Activated CD4-positive, alpha-beta T cell treated with anti-CD3 and anti-CD28 coated beads, Interleukin-2, amount 10 ng/mL, durations not matched to agents 24 days and 14 days (primary cell): ENCODE measurements at regions of chr14 and their contacts with region 1.

Region 1: GRCh38 chr14:31400031-31400638 is 20.2 kb downstream of the HEATR5A start:
- DNase-seq: no peak
- H3K4me3 Mint-ChIP-seq: peak overlapping the region; percentile 28
- H3K27ac Mint-ChIP-seq: peak overlapping the region; percentile 80
- H3K4me1 Mint-ChIP-seq: peaks cover 19% of the 10 kb centered on the region
- H3K27me3 Mint-ChIP-seq: no peaks in the 10 kb centered on the region

Region 2: DNA sequence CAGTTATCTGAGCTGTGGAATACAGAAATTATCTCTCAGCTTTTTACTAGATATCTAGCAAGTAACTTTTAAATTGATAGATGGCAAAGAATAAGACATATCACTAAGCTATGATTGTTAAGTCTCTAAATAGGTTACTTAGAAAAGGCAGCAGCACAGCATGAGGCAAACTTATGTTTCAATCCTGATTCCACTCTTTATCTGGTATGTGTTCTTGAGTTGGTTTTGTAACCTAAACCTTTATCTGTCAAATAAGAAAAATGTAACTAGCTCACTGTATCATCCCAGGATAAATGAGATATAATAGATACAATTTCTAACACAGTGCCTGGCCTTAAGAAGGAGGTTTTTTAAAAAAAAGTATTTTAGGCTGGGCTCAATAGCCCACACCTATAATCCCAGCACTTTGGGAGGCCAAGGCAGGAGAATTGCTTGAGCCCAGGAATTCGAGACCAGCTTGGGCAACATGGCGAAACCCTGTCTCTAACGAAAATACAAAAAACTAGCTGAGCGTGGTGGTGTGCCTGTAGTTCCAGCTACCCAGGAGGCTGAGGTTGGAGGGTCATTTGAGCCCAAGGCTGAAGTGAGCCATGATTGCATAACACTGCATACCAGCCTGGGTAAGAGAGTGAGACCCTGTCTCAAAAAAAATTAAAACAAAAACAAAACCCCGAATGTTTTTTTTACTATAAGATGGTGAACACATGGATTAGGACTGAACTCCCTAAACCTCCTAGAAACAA is 36.6 kb before region 1 on chr14:
- intact Hi-C with region 1: no loop called
- DNase-seq: no peak
- H3K4me3 Mint-ChIP-seq: no peak overlapping the region
- H3K27ac Mint-ChIP-seq: no peak overlapping the region
- H3K4me1 Mint-ChIP-seq: no peaks in the 10 kb centered on the region
- H3K27me3 Mint-ChIP-seq: no peaks in the 10 kb centered on the region

Region 3: DNA sequence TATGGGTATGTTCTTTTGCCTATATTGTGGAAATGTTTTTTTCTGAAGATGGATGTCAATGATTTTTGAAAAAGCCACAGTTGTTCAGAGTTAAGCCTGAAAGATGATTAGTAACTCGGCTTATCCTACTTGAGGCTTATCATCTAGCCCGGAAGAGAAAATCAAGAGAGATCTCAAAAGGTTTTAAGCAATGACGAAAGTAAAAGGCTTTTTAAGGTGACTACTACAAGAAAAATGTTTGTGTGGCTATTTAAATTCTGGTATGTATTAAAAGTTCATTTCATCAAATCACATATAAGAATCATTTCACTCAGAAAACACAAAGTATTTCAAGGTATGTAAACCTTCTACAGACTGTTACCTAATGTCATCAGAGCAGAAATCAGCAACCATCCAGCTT is 20.0 kb before region 1 on chr14:
- intact Hi-C with region 1: loop called (anchors 1 kb)
- DNase-seq: no peak
- H3K4me3 Mint-ChIP-seq: no peak overlapping the region
- H3K27ac Mint-ChIP-seq: no peak overlapping the region
- H3K4me1 Mint-ChIP-seq: peaks cover 10% of the 10 kb centered on the region
- H3K27me3 Mint-ChIP-seq: no peaks in the 10 kb centered on the region

Region 4: DNA sequence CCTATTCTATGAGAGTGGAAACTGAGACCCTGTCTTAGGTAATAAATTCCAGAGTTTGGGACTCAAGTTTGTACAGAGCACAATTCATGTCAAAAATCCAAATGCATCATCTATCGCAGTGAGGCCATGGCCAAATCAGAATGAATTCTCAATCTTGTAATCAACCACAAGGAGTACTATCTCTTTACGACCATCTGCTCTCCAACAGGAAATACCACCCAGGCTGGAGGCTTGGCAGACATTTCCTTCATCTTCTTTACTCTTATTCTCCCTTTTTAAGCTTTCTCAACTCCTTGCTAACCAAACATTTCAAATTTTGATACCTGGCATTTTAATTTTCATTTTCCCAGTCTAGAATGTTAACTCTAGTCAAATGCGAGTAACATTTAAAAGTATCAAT is 769.1 kb after region 1 on chr14:
- intact Hi-C with region 1: no loop called
- DNase-seq: no peak
- H3K4me3 Mint-ChIP-seq: no peak overlapping the region
- H3K27ac Mint-ChIP-seq: no peak overlapping the region
- H3K4me1 Mint-ChIP-seq: no peaks in the 10 kb centered on the region
- H3K27me3 Mint-ChIP-seq: peaks cover 7% of the 10 kb centered on the region